ENCODE measurements at regions of chr1 and their contacts with region 1.

Region 1: GRCh38 chr1:234114648-234115307 is 210.3 kb downstream of the SLC35F3 start:
- DNase-seq: peak in 3 of 9 experiments; percentile 1 to 62 (median 38)
- ATAC-seq: no peak
- H3K4me3 ChIP-seq: no peak overlapping the region
- H3K4me3 Mint-ChIP-seq: peak overlapping the region; percentile 18
- H3K27ac ChIP-seq: no peak overlapping the region
- H3K27ac Mint-ChIP-seq: no peak overlapping the region
- H3K4me1 ChIP-seq: no peaks in the 10 kb centered on the region
- H3K4me1 Mint-ChIP-seq: peaks cover 5% of the 10 kb centered on the region
- H3K27me3 ChIP-seq: peaks cover 0 to 4% of the 10 kb centered on the region in 2 experiments
- H3K27me3 Mint-ChIP-seq: peaks cover 17% of the 10 kb centered on the region
- CTCF ChIP-seq: peak; percentile 40

Region 2: DNA sequence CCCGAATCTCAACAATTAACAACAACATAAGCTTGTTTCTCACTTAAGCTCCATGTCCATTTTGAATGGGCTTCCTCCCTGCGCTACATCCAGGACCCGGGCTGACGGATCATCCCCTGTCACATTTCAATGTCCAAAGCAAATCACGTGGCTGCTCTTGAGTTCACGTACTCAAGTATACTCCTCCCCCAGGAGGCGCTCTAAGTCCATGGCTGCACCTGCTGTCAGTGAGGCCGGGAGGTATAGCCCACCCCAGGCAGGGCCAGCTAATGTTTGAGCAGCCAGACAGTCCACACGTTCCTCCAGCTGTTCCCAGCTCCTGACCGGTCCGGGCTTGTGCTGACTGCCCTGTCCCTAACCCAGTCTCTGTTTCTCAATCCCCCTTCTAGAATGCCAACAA is 10.5 kb after region 1 on chr1:
- CTCF ChIA-PET with region 1: interaction called, 14 read pairs
- POLR2A ChIA-PET with region 1: no interaction called
- intact Hi-C with region 1: no loop called
- DNase-seq: peak in 3 of 9 experiments; percentile 12 to 35 (median 16)
- ATAC-seq: no peak
- H3K4me3 ChIP-seq: no peak overlapping the region
- H3K4me3 Mint-ChIP-seq: no peak overlapping the region
- H3K27ac ChIP-seq: no peak overlapping the region
- H3K27ac Mint-ChIP-seq: no peak overlapping the region
- H3K4me1 ChIP-seq: no peaks in the 10 kb centered on the region
- H3K4me1 Mint-ChIP-seq: no peaks in the 10 kb centered on the region
- H3K27me3 ChIP-seq: peaks cover 0 to 2% of the 10 kb centered on the region in 2 experiments
- H3K27me3 Mint-ChIP-seq: peaks cover 26% of the 10 kb centered on the region
- CTCF ChIP-seq: no peak

Region 3: GRCh38 chr1:234955107-234955731 is 840.4 kb after region 1 on chr1:
- CTCF ChIA-PET with region 1: no interaction called
- POLR2A ChIA-PET with region 1: no interaction called
- intact Hi-C with region 1: no loop called
- DNase-seq: peak in 4 of 9 experiments; percentile 29 to 60 (median 41)
- ATAC-seq: peak; percentile 36
- H3K4me3 ChIP-seq: no peak overlapping the region
- H3K4me3 Mint-ChIP-seq: no peak overlapping the region
- H3K27ac ChIP-seq: peak overlapping the region in 1 of 2 experiments; percentile 45
- H3K27ac Mint-ChIP-seq: peak overlapping the region; percentile 65
- H3K4me1 ChIP-seq: peaks cover 26% of the 10 kb centered on the region
- H3K4me1 Mint-ChIP-seq: peaks cover 34% of the 10 kb centered on the region
- H3K27me3 ChIP-seq: no peaks in the 10 kb centered on the region
- H3K27me3 Mint-ChIP-seq: no peaks in the 10 kb centered on the region
- CTCF ChIP-seq: no peak